ENCODE measurements at regions of chr13 and their contacts with region 1.

Region 1: DNA sequence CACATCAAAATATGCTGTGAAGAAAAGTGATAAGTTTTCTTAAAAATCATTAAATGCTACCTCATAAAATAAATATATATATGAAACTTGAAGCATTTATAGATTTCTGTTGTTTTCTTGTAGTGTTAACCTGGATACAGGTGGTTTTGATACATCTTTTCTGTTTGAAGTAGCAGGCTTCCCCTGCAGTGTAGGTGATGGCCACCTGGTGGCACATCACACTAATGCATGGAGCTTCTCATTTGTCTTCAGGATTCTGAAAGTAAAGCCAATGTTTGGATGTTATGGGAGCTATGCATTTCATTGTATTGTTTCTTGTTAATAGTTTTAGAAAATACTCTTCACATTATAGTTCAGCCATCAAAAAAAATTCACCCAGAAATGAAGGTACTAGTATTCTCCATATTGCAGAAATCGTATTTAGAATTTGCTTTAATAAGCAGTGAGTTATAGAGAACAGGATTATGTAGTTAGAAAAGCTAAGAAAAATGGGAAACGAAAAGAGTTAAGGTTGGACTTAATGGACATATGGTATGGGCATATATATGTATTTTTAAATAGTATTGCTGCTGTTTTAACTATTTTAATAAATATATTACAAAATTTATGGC is 18.7 kb downstream of the GPR180 start:
- DNase-seq: no peak
- ATAC-seq: peak; percentile 60
- H3K4me3 Mint-ChIP-seq: no peak overlapping the region
- H3K27ac Mint-ChIP-seq: no peak overlapping the region
- H3K4me1 Mint-ChIP-seq: peaks cover 9% of the 10 kb centered on the region
- H3K27me3 Mint-ChIP-seq: no peaks in the 10 kb centered on the region

Region 2: DNA sequence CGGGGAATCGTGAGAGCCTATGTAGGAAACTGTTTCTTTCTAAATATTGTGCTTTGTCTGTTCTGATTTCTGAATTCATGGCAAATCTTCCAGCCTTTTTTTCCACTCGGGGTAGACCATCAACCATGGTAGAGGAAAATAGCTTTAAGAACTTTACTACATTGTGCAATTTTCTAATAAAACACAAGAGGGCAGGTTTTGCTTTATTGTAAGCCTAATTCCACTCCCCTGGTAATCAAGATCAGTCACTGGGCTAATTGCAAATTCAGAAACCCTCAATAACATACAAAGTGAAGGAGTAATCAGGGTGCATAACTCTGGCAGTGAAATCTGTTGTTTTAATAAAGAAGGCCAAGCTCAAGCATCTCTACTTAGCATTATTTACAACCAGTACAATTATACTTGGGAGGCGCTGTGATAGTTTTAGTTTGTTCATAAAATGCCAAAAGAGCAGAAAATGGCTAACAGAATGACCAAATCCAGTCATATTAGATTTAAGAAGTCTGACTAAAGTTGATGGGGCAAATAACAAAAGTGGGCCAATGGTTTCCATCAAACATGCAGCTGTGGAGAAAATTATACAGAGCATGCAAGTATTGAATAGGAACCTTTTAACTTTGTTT is 184.7 kb before region 1 on chr13:
- CTCF ChIA-PET with region 1: interaction called, 128 read pairs
- DNase-seq: no peak
- ATAC-seq: peak; percentile 58
- H3K4me3 Mint-ChIP-seq: no peak overlapping the region
- H3K27ac Mint-ChIP-seq: no peak overlapping the region
- H3K4me1 Mint-ChIP-seq: peaks cover 16% of the 10 kb centered on the region
- H3K27me3 Mint-ChIP-seq: peaks cover 3% of the 10 kb centered on the region

Region 3: DNA sequence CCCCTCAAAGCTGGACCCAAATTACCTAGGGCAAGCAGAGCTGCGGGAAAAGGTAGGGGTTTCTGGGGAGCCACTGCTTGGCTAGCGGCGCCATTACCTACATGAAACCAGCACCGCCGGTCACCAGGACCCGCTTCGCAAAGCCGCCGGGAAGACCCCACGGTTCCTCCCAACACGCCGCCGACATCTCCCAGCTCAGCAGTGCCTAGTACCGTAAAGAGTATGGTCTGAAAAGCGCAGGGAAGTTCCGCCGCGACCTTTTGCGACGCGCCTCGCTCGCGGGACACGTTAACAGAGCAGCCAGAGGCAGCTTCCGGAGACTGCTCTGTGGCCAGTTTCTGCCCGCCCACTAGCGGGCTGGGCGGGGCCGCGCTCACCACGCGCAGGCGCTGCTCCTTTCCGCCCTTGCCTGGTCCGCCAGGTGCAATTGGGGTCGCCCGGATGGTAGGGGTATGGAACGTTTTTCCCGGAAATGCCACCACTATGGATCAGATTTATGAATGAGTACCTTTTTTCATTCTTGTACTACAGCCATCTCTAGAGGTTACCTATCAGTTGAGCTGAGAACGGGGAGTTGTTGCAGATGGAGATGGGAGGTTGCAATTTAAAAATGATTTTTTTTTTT is 24.3 kb before region 1 on chr13 and contains the start of gene TGDS:
- CTCF ChIA-PET with region 1: interaction called, 10 read pairs
- DNase-seq: peak; percentile 95
- ATAC-seq: peak; percentile 98
- H3K4me3 Mint-ChIP-seq: peak within 1 kb of the TSS; percentile 92
- H3K27ac Mint-ChIP-seq: peak within 1 kb of the TSS; percentile 89
- H3K4me1 Mint-ChIP-seq: peaks cover 45% of the 10 kb centered on the region
- H3K27me3 Mint-ChIP-seq: no peaks in the 10 kb centered on the region
- total RNA-seq, gene TGDS: 14.0 to 19.5 TPM

Region 4: DNA sequence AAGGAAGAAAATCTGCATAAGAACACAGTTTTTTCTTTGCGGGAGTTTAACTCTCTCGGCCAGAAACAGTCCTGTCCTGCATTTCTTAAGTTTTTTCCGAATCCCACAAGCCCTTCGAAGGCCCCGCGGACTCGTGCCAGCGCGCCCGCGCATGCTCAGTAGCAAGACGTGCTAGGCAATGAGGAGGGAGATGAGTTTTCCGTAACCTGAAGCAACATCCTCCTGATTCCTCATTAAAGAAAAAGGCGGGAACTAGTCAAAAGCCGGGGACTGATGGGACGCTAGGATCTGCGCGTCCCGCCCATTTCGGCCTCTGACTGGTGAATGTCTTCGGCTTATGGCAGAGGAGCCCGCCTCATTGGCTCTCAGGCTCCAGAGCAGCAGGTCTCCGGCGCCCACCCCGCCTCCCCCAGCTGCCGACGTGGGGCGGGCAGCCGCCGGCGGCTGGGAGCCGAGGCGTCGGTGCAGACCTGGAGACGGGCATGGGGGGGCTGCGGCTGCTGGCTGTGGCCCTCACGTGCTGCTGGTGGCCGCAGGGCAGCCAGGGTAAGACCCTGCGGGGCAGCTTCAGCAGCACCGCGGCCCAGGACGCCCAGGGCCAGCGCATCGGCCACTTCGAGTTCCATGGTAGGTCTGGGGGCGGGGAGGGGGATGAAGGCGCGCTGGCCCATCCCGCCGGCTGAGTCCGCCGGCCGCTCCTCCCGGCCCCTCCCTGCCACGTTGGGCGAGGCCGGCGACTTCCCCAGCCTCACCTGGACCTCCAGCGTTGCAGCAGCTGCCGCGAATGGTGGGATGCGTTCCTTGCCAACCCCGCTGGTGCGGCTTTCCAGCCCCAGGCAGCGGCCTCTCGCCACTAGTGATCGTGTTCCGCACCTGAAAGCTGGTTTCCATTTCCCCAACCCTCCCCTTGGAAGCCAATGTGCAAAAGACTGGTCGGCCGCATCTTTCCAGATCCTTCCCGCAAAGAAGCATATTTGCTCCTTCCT is 18.7 kb before region 1 on chr13 and contains the start of gene GPR180:
- CTCF ChIA-PET with region 1: interaction called, 12 read pairs
- DNase-seq: peak; percentile 95
- ATAC-seq: peak; percentile 100
- H3K4me3 Mint-ChIP-seq: peak within 1 kb of the TSS; percentile 84
- H3K27ac Mint-ChIP-seq: peak within 1 kb of the TSS; percentile 76
- H3K4me1 Mint-ChIP-seq: peaks cover 34% of the 10 kb centered on the region
- H3K27me3 Mint-ChIP-seq: no peaks in the 10 kb centered on the region
- total RNA-seq, gene GPR180: 7.2 to 7.5 TPM

Measured in activated CD8-positive, alpha-beta memory T cell treated with anti-CD3 and anti-CD28 coated beads, Interleukin-2, amount 10 ng/mL, durations not matched to agents 7 days and 5 days (primary cell).